Kidney (tissue), 22 donors: ENCODE measurements at regions of chr7 and their contacts with region 1.

Region 1: GRCh38 chr7:97819161-97819560 is 53.0 kb downstream of the ASNS start:
- DNase-seq: no peak
- H3K4me3 ChIP-seq: no peak overlapping the region
- H3K27ac ChIP-seq: no peak overlapping the region
- H3K4me1 ChIP-seq: no peaks in the 10 kb centered on the region
- H3K27me3 ChIP-seq: no peaks in the 10 kb centered on the region
- CTCF ChIP-seq: no peak

Region 2: GRCh38 chr7:97499204-97499603 is 320.0 kb before region 1 on chr7:
- intact Hi-C with region 1: loop called (anchors 10 kb)
- DNase-seq: peak in 4 of 5 donors; percentile 31 to 44 (median 40)
- H3K4me3 ChIP-seq: no peak overlapping the region
- H3K27ac ChIP-seq: no peak overlapping the region
- H3K4me1 ChIP-seq: no peaks in the 10 kb centered on the region
- H3K27me3 ChIP-seq: no peaks in the 10 kb centered on the region
- CTCF ChIP-seq: peak; percentile 48

Region 3: GRCh38 chr7:97971990-97972943 is 153.1 kb after region 1 on chr7:
- intact Hi-C with region 1: no loop called
- DNase-seq: peak; percentile 74 to 94 (median 80)
- H3K4me3 ChIP-seq: peak overlapping the region; percentile 73 to 88 (median 84)
- H3K27ac ChIP-seq: no peak overlapping the region
- H3K4me1 ChIP-seq: peaks cover 0 to 2% (median 0%) of the 10 kb centered on the region in 3 donors
- H3K27me3 ChIP-seq: no peaks in the 10 kb centered on the region
- CTCF ChIP-seq: peak; percentile 17

Region 4: DNA sequence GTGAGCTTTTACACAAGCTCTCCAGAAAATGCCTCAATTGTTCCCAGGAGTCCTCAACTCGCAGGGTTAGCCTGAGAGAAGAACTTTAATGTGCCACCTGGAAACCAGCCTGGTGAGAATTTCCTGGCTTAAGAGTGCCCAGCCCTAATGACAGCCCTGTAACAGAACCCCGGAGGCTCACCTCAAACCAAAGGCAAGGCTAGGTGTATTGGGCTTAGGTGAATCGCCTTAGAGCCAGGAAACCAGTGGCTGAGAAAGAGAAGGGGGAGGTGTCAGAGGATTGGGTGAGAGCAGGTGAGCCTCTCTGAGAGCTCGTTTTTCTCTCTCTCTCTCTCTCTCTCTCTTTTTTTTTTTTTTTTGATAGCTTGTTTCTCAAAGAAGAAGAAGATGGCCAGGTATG is 163.5 kb after region 1 on chr7:
- intact Hi-C with region 1: no loop called
- DNase-seq: no peak
- H3K4me3 ChIP-seq: no peak overlapping the region
- H3K27ac ChIP-seq: no peak overlapping the region
- H3K4me1 ChIP-seq: no peaks in the 10 kb centered on the region
- H3K27me3 ChIP-seq: no peaks in the 10 kb centered on the region
- CTCF ChIP-seq: no peak